Activated naive CD4-positive, alpha-beta T cell treated with anti-CD3 and anti-CD28 coated beads for 36 hours (primary cell): ENCODE measurements at regions of chr6 and their contacts with region 1.

Region 1: GRCh38 chr6:131914967-131915751 is 36.0 kb downstream of the CCN2 start:
- DNase-seq: peak; percentile 77
- H3K4me3 Mint-ChIP-seq: no peak overlapping the region
- H3K27ac Mint-ChIP-seq: no peak overlapping the region
- H3K4me1 Mint-ChIP-seq: peaks cover 10% of the 10 kb centered on the region
- H3K27me3 Mint-ChIP-seq: peaks cover 52% of the 10 kb centered on the region

Region 2: DNA sequence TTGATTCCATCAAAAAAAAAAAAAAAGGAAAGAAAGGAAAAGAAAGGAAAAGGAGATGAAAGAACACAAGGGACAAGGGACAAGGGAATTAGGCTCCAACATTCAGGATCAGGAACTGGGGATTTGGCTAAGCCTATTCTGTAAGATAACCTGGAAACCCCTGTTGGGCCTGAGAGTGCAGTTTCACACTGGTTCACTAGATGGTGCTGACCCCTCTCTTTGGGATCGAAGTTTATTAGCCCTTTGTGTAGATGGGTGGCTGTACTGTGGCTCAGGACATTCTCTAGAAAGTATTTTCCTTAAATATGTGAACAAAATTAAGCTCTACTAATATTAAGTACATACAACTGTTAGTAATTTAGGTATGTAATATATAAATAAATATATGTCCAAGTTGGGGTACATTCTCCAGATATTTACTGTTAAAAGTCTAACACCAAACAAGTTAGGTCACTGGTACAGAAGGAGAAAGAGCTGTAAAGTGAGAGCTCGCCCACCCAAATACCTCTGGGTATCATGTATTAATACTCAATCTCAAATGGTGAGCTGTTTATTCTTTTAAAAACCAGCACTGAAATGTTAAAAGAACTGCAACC is 220.2 kb before region 1 on chr6:
- CTCF ChIA-PET with region 1: interaction called, 19 read pairs
- intact Hi-C with region 1: loop called (anchors 2 kb)
- DNase-seq: peak; percentile 44
- H3K4me3 Mint-ChIP-seq: no peak overlapping the region
- H3K27ac Mint-ChIP-seq: no peak overlapping the region
- H3K4me1 Mint-ChIP-seq: no peaks in the 10 kb centered on the region
- H3K27me3 Mint-ChIP-seq: no peaks in the 10 kb centered on the region

Region 3: GRCh38 chr6:131937703-131938631 is 22.8 kb after region 1 on chr6:
- CTCF ChIA-PET with region 1: interaction called, 12 read pairs
- intact Hi-C with region 1: no loop called
- DNase-seq: no peak
- H3K4me3 Mint-ChIP-seq: no peak overlapping the region
- H3K27ac Mint-ChIP-seq: no peak overlapping the region
- H3K4me1 Mint-ChIP-seq: no peaks in the 10 kb centered on the region
- H3K27me3 Mint-ChIP-seq: peaks cover 7% of the 10 kb centered on the region

Region 4: DNA sequence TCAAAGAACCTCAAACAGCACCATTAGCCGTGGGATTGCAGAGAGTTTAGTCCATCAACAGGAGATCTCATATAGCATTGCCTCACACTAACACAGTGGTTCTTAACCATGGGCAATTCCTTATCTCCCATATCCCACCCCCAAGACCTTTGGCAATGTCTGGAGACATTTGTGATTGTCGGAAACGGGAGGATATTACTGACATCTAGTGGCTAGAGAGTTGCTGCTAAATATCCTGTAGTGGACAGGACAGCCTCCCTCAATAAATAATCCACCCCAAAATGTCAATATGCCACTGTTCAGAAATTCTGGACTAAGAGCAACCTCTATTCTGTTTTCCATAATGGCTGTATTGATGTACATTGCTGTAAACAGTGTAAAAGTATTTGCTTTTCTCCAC is 246.1 kb after region 1 on chr6:
- CTCF ChIA-PET with region 1: no interaction called
- intact Hi-C with region 1: loop called (anchors 5 kb)
- DNase-seq: no peak
- H3K4me3 Mint-ChIP-seq: no peak overlapping the region
- H3K27ac Mint-ChIP-seq: no peak overlapping the region
- H3K4me1 Mint-ChIP-seq: no peaks in the 10 kb centered on the region
- H3K27me3 Mint-ChIP-seq: no peaks in the 10 kb centered on the region

Region 5: DNA sequence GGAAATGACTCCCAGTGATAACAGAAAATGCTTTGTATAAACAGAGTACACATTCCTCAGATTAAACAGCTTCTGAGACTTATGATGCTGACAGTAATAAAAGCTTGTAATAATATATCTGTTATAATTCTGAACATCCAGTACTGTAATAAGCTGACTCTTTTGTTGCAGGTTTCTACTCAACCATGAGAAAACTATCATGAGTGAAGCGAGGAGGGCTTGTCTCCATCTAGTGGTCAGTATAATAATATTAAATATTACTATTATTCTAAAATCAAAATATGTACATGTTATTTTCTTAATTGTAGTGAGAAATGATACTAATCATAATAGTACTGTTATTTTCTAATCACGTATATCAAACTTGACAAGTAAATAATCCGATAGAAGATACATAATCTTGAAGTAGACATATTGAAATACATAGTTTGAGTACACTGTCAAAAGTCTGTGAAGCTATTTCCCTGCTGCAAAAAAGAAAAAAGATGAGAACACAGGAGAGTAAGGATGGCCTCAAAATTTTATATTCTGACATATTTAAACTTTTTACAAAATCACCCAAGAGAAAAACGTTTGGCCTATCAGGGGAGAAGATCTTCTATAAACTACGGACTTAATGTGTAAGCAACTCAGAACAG is 303.0 kb after region 1 on chr6:
- CTCF ChIA-PET with region 1: interaction called, 9 read pairs
- intact Hi-C with region 1: loop called (anchors 1 kb)
- DNase-seq: no peak
- H3K4me3 Mint-ChIP-seq: no peak overlapping the region
- H3K27ac Mint-ChIP-seq: no peak overlapping the region
- H3K4me1 Mint-ChIP-seq: no peaks in the 10 kb centered on the region
- H3K27me3 Mint-ChIP-seq: peaks cover 7% of the 10 kb centered on the region

Region 6: GRCh38 chr6:132300323-132300949 is 385.3 kb after region 1 on chr6:
- CTCF ChIA-PET with region 1: interaction called, 5 read pairs
- intact Hi-C with region 1: loop called (anchors 5 kb)
- DNase-seq: peak; percentile 43
- H3K4me3 Mint-ChIP-seq: no peak overlapping the region
- H3K27ac Mint-ChIP-seq: no peak overlapping the region
- H3K4me1 Mint-ChIP-seq: no peaks in the 10 kb centered on the region
- H3K27me3 Mint-ChIP-seq: peaks cover 26% of the 10 kb centered on the region

Region 7: DNA sequence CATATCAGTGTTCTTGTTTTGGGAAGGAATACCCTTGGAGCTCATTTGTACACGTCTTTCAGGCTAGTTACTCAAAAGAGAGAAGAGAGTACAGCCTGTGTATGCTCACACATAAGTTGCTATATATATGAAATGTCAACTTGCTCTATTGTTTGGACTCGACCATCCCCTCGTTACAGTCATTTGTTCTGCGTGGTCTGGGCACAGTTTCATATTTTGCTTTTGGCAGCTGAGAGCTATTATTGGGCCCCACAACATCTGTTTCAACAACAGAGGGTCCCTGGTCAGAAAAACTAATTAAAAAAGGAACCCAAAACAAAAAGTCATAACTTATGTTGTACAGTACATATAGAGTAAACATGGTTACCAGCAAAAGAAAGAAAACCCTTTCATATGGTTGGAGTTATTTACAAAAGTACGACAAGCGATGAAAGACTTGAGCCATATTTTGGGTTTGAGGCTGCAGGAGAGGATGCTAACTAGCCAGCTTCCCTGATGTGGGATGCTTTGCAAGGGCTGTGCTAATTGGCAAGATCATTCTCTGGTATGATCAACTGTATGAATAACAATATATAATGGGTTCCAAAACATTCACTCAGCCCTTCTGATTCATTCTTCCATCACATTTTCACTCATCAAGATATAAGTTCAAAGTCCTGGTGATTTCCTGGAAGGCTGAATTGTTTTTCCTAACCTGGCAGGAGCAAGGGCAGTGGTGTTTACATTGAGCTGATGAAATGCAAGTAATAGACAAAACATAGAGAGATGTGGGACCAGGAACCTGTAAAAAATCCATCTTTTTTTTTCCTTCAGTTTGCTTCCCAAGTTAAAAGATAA is 1037.1 kb after region 1 on chr6:
- CTCF ChIA-PET with region 1: no interaction called
- intact Hi-C with region 1: no loop called
- DNase-seq: no peak
- H3K4me3 Mint-ChIP-seq: no peak overlapping the region
- H3K27ac Mint-ChIP-seq: no peak overlapping the region
- H3K4me1 Mint-ChIP-seq: no peaks in the 10 kb centered on the region
- H3K27me3 Mint-ChIP-seq: peaks cover 29% of the 10 kb centered on the region